WTC11 (cell line): ENCODE measurements at regions of chr17 and their contacts with region 1.

Region 1: GRCh38 chr17:42760652-42761581 is at the start of gene RAMP2:
- DNase-seq: peak; percentile 51
- ATAC-seq: peak; percentile 60
- H3K4me3 Mint-ChIP-seq: peak within 1 kb of the TSS; percentile 67
- H3K27ac Mint-ChIP-seq: no peak within 1 kb of the TSS
- H3K4me1 Mint-ChIP-seq: peaks cover 25% of the 10 kb centered on the region
- H3K27me3 Mint-ChIP-seq: peaks cover 55% of the 10 kb centered on the region
- CTCF ChIP-seq: no peak
- total RNA-seq, gene RAMP2: 10.9 to 13.1 TPM (median 11.6 TPM) in 3 replicates

Region 2: GRCh38 chr17:42388381-42389134 is 372.4 kb before region 1 on chr17 and contains the start of gene STAT3:
- CTCF ChIA-PET with region 1: no interaction called
- POLR2A ChIA-PET with region 1: no interaction called
- DNase-seq: peak; percentile 100
- ATAC-seq: peak; percentile 97
- H3K4me3 Mint-ChIP-seq: peak within 1 kb of the TSS; percentile 94
- H3K27ac Mint-ChIP-seq: peak within 1 kb of the TSS; percentile 98
- H3K4me1 Mint-ChIP-seq: peaks cover 41% of the 10 kb centered on the region
- H3K27me3 Mint-ChIP-seq: no peaks in the 10 kb centered on the region
- CTCF ChIP-seq: no peak
- total RNA-seq, gene STAT3: 74.4 to 98.0 TPM (median 74.9 TPM) in 3 replicates

Region 3: GRCh38 chr17:42548070-42548837 is 212.7 kb before region 1 on chr17:
- CTCF ChIA-PET with region 1: interaction called, 15 read pairs
- POLR2A ChIA-PET with region 1: no interaction called
- DNase-seq: peak; percentile 97
- ATAC-seq: peak; percentile 87
- H3K4me3 Mint-ChIP-seq: peak overlapping the region; percentile 59
- H3K27ac Mint-ChIP-seq: no peak overlapping the region
- H3K4me1 Mint-ChIP-seq: peaks cover 15% of the 10 kb centered on the region
- H3K27me3 Mint-ChIP-seq: peaks cover 2% of the 10 kb centered on the region; the same call in 1 of the 2 replicates
- CTCF ChIP-seq: no peak; the same call in 1 of the 2 replicates

Region 4: GRCh38 chr17:42591411-42591810 is 169.5 kb before region 1 on chr17:
- CTCF ChIA-PET with region 1: no interaction called
- POLR2A ChIA-PET with region 1: no interaction called
- DNase-seq: no peak
- ATAC-seq: no peak
- H3K4me3 Mint-ChIP-seq: no peak overlapping the region
- H3K27ac Mint-ChIP-seq: no peak overlapping the region
- H3K4me1 Mint-ChIP-seq: no peaks in the 10 kb centered on the region
- H3K27me3 Mint-ChIP-seq: no peaks in the 10 kb centered on the region
- CTCF ChIP-seq: no peak

Region 5: DNA sequence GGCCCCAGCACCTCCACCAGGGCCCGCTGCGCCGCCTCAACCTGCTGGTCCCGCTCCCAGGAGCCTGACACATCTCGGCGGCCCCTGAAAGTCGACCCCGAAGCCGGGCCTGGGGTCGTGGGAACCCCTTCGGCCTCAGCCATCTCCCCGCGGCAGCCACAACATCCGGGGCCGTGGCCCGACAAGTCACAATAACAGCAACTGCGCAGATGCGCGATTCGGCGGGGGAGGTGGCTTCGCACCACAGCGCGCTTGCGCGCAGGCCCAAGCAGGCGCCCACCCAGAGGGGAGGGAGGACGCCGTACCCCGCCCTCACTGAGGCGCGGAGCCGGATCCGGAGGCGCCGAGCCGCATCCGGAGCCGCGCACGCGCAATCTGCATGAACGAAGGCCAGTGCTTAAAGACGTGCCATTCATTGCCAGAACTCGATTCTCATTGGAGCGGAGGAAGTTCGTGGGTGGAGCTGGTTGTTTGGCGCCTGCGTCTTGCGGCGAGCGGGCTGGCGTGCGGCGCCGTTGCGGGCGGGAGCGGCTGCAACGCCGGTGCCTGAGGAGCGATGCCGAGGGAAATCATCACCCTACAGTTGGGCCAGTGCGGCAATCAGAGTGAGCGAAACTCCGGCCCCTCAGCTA is 151.6 kb before region 1 on chr17 and contains the starts of genes RETREG3 and TUBG1:
- CTCF ChIA-PET with region 1: interaction called, 17 read pairs
- POLR2A ChIA-PET with region 1: no interaction called
- DNase-seq: peak; percentile 99
- ATAC-seq: peak; percentile 94
- H3K4me3 Mint-ChIP-seq: peak within 1 kb of the TSS; percentile 100
- H3K27ac Mint-ChIP-seq: peak within 1 kb of the TSS; percentile 97
- H3K4me1 Mint-ChIP-seq: peaks cover 17% of the 10 kb centered on the region
- H3K27me3 Mint-ChIP-seq: no peaks in the 10 kb centered on the region
- CTCF ChIP-seq: no peak
- total RNA-seq, gene RETREG3: 39.8 to 43.2 TPM (median 40.4 TPM) in 3 replicates
- total RNA-seq, gene TUBG1: 130 to 141 TPM (median 140 TPM) in 3 replicates

Region 6: DNA sequence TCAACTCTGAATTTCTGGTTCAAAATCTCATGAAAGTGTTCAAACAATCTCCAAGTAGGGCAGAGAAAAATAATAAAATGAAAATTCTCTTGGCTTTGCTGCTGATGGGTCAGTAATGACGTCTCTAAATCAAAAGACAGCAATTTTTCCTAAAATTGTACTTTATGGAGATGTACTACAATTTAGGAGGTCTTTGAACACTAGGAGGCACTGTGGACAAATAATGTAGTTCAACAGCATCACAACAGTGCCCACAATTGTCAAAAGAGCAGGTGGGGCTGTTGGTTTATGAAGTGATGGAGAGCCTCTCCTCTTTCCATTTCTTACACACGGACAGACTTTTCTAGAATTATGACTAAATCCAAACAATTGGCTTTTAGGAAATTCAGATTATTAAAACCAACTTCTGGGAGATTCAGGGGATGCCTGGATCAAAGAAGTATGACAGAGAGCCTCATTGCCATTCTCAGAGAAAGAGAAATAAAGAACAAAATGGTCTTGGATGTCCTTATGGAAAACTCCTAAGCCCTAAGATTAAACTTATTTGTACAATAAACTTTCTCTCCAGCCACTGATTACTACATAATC is 39.8 kb before region 1 on chr17:
- CTCF ChIA-PET with region 1: interaction called, 20 read pairs
- POLR2A ChIA-PET with region 1: no interaction called
- DNase-seq: no peak
- ATAC-seq: peak; percentile 62
- H3K4me3 Mint-ChIP-seq: no peak overlapping the region
- H3K27ac Mint-ChIP-seq: no peak overlapping the region
- H3K4me1 Mint-ChIP-seq: no peaks in the 10 kb centered on the region
- H3K27me3 Mint-ChIP-seq: no peaks in the 10 kb centered on the region
- CTCF ChIP-seq: peak; percentile 41

Region 7: DNA sequence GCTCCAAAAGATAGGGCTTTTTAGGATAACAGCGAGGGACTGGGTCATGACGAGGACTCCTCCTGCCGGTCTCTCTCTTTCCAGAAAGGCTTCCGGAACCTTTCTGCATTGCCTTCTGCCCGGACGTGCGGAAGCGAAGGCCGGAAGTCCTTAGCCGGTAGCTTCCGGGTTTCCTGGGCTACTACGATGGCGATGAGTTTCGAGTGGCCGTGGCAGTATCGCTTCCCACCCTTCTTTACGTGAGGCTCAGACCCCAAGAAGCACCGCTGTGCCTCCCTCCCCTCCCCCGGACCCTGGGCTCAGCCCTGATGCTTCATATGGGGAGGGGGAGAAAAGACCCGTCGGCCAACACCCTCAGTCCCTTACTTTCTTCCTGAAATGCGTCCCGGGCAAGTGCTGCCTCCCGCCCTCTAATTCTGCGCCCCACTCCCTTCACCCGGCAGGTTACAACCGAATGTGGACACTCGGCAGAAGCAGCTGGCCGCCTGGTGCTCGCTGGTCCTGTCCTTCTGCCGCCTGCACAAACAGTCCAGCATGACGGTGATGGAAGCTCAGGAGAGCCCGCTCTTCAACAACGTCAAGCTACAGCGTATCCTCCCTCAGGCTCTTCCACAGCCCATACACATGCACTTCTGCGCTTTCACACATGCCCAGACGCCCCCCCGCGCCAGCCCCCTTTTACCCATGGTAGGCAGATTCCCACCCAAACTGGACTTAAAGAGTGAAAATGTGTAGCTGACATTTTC is 12.5 kb after region 1 on chr17 and contains the start of gene VPS25:
- CTCF ChIA-PET with region 1: interaction called, 44 read pairs
- POLR2A ChIA-PET with region 1: interaction called, 8 read pairs
- DNase-seq: peak; percentile 77
- ATAC-seq: peak; percentile 94
- H3K4me3 Mint-ChIP-seq: peak within 1 kb of the TSS; percentile 99
- H3K27ac Mint-ChIP-seq: peak within 1 kb of the TSS; percentile 97
- H3K4me1 Mint-ChIP-seq: peaks cover 7% of the 10 kb centered on the region
- H3K27me3 Mint-ChIP-seq: no peaks in the 10 kb centered on the region; the same call in 1 of the 2 replicates
- CTCF ChIP-seq: no peak
- total RNA-seq, gene VPS25: 98.6 to 103 TPM (median 101 TPM) in 3 replicates

Region 8: DNA sequence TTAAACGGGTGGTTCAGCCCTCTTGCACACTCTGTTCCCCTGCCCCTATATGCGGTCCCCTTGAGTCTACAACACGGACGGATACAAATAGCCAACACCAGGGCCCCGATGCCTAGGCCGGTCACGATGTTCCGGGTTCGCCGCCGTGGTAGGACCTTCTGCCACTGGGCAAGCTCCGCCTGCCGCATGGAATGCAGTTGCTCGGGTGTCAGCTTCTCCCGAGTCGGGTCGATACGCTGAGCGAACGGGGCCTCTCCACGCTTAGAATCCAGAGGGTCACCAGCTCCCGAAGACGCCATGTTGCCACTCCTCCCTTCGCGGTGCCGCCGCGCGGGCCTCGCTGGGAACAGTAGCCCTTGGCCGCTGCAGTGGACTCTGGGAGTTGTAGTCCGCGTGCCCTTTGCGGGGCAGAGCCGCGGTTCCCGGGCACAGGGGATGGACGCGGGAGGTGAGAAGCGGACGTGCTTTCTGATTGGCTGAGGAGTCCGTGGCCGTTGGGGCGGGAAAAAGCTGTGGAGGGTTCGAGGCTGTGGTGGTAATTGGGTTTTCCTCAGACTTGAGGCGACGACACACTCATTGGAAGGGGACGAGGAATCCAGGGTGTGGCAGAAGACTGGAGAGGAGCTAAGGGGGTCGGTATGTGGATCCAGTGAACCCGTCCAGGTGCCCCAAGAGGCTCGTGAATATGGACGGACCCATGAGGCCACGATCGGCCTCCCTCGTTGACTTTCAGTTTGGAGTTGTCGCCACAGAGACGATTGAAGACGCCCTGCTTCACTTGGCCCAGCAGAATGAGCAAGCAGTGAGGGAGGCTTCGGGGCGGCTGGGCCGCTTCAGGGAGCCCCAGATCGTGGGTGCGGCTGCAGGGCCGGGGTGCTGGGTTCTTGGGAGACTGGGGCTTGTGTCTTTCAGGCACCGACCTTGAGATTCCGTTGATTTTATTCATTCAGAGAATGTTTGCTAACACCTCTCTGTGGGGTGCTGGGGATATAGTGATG is 37.8 kb after region 1 on chr17 and contains the starts of genes CNTD1 and COA3:
- CTCF ChIA-PET with region 1: interaction called, 14 read pairs
- POLR2A ChIA-PET with region 1: no interaction called
- DNase-seq: peak; percentile 92
- ATAC-seq: peak; percentile 99
- H3K4me3 Mint-ChIP-seq: peak within 1 kb of the TSS; percentile 94
- H3K27ac Mint-ChIP-seq: no peak within 1 kb of the TSS; the same call in 1 of the 2 replicates
- H3K4me1 Mint-ChIP-seq: peaks cover 6% of the 10 kb centered on the region; the same call in 1 of the 2 replicates
- H3K27me3 Mint-ChIP-seq: peaks cover 29% of the 10 kb centered on the region
- CTCF ChIP-seq: no peak
- total RNA-seq, gene CNTD1: not detected in 3 replicates
- total RNA-seq, gene COA3: 54.2 to 65.2 TPM (median 60.9 TPM) in 3 replicates

Region 9: DNA sequence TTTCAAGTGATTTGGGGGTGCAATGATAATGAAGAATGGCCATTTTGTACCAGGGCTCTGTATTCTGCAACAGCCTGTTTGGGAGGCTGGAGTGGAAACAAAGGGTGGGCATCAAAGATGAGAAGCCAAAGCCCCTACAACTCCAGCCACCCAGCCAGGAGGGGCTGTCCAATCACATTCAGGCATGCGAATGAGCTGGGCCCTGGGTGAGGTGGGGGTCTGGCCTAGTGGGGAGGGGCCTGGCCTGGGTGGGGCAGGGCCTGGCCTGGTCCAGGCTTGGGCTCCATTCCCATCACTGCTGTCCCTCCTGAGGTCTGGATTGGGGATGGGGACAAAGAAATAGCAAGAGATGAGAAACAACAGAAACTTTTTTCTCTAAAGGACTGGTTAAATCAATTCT is 96.5 kb after region 1 on chr17:
- CTCF ChIA-PET with region 1: no interaction called
- POLR2A ChIA-PET with region 1: no interaction called
- DNase-seq: no peak
- ATAC-seq: peak; percentile 81
- H3K4me3 Mint-ChIP-seq: no peak overlapping the region
- H3K27ac Mint-ChIP-seq: no peak overlapping the region
- H3K4me1 Mint-ChIP-seq: no peaks in the 10 kb centered on the region
- H3K27me3 Mint-ChIP-seq: no peaks in the 10 kb centered on the region; the same call in 1 of the 2 replicates
- CTCF ChIP-seq: no peak

Region 10: GRCh38 chr17:42928714-42929496 is 168.0 kb after region 1 on chr17:
- CTCF ChIA-PET with region 1: interaction called, 12 read pairs
- POLR2A ChIA-PET with region 1: no interaction called
- DNase-seq: peak; percentile 32
- ATAC-seq: peak; percentile 97
- H3K4me3 Mint-ChIP-seq: no peak overlapping the region
- H3K27ac Mint-ChIP-seq: peak overlapping the region; percentile 72
- H3K4me1 Mint-ChIP-seq: peaks cover 14% of the 10 kb centered on the region
- H3K27me3 Mint-ChIP-seq: no peaks in the 10 kb centered on the region
- CTCF ChIP-seq: peak; percentile 45